GM10248 (cell line): ENCODE measurements at regions of chr3 and their contacts with region 1.

Region 1: DNA sequence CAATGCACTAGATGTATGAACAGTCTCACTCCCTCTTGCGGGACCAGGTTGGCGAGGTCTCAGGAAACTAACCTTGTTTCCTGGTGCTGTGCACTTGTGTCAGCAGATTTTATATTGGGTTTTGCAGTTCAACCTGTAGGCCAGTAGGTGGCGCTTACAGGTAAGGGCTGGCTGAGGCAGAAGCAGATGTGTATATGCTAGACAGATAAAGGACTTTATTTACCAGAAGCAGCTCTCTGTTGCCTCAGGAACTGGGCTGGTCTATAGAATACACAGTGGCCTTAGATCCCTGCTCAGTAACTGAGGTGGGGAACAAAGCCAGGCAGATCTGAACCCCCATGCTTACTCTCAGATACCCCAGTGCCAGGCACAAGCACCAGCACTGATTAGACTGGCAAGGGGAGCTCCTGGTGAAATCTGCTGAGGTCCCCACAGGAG is 296.8 kb downstream of the DOCK3 start:
- DNase-seq: peak; percentile 64
- CTCF ChIP-seq: peak; percentile 97

Region 2: GRCh38 chr3:51371943-51372557 is 400.5 kb after region 1 on chr3:
- CTCF ChIA-PET with region 1: interaction called, 27 read pairs
- POLR2A ChIA-PET with region 1: no interaction called
- DNase-seq: peak; percentile 45
- CTCF ChIP-seq: peak; percentile 71